Heart right ventricle (tissue), 16 donors: ENCODE measurements at regions of chr11 and their contacts with region 1.

Region 1: DNA sequence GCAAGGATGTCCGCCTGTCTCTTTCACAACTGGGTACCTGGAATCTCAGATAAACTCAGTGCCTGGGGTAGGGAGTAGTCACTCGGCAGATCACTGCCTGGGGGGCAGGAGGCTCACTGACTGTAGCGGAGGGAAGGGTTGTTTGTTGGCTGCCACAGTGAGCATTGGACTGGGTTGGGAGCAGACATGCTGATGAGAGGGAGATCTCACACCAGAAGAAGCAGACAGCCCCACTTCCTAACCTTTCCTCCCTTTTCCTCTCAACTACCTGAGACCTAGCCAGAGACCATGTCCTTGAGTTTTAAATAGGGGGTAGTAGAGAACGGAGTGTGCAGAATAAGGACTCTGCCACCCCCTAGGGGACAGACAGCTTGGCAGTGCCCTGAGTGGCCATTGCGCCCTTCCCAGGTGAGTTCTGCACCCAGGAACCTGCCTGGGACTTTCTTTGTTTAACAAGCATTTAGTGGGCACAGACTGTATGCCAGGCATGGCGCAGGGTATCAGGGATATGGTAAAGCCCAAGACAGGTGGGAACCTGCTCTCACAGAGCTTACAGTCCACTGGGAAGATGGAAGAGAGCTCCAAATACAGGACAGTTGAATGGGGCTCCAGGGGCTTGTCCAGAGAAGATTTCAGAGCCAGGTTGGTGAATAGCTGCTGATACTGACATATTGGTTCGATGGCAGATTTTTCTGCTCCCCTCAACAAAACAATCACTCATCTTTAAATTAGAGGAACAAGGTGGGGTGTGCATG is 115.7 kb upstream of the NNMT start:
- DNase-seq: peak; percentile 46 to 72
- ATAC-seq: peak; percentile 53 to 87 (median 69)
- H3K4me3 ChIP-seq: peak overlapping the region in 7 of 10 donors; percentile 4 to 38 (median 15)
- H3K27ac ChIP-seq: peak overlapping the region; percentile 76 to 97 (median 94)
- H3K4me1 ChIP-seq: peaks cover 33 to 92% (median 84%) of the 10 kb centered on the region in 9 donors
- H3K27me3 ChIP-seq: no peaks in the 10 kb centered on the region
- CTCF ChIP-seq: peak; percentile 17 to 84 (median 72)

Region 2: GRCh38 chr11:113875234-113876073 is 305.0 kb before region 1 on chr11 and contains the start of gene USP28:
- intact Hi-C with region 1: loop called in 1 of 10 experiments (anchors 10 kb)
- DNase-seq: peak; percentile 97 to 98
- ATAC-seq: peak; percentile 82 to 96 (median 90)
- H3K4me3 ChIP-seq: peak within 1 kb of the TSS; percentile 50 to 91 (median 84)
- H3K27ac ChIP-seq: peak within 1 kb of the TSS; percentile 80 to 98 (median 94)
- H3K4me1 ChIP-seq: peaks cover 0 to 50% (median 30%) of the 10 kb centered on the region in 9 donors
- H3K27me3 ChIP-seq: no peaks in the 10 kb centered on the region
- CTCF ChIP-seq: peak in 2 of 9 donors; percentile 16 to 18
- total RNA-seq, gene USP28: 72.2 to 174 (median 136) TPM

Region 3: GRCh38 chr11:114110952-114111947 is 69.2 kb before region 1 on chr11:
- intact Hi-C with region 1: loop called in 1 of 10 experiments (anchors 1 kb)
- DNase-seq: peak; percentile 40 to 58
- ATAC-seq: peak in 7 of 8 donors; percentile 35 to 72 (median 57)
- H3K4me3 ChIP-seq: peak overlapping the region in 8 of 10 donors; percentile 3 to 40 (median 32)
- H3K27ac ChIP-seq: peak overlapping the region; percentile 50 to 85 (median 75)
- H3K4me1 ChIP-seq: peaks cover 34 to 97% (median 85%) of the 10 kb centered on the region in 9 donors
- H3K27me3 ChIP-seq: no peaks in the 10 kb centered on the region
- CTCF ChIP-seq: peak in 2 of 9 donors; percentile 17 to 19

Region 4: DNA sequence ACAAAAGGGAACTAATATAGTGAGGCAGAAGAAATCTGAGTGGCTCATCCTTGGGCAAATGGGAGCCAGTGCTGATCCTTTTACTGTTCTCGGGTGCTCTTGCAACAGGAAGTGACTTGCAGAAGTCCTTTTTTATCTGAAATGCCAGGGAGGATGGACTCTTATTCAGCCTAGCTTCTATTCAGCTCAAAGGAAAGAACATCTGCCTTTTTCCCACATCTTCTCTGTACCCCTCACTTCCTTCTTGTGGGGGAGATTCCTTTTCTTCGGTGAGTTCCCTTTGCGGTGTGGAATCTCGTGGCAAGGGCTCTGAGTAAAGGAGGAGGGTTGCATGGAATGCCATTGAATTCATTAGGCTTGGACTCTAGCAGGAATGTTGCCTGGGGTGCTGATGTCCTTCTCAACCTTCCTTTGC is 44.7 kb before region 1 on chr11:
- intact Hi-C with region 1: no loop called
- DNase-seq: no peak
- ATAC-seq: peak in 3 of 8 donors; percentile 2 to 21 (median 18)
- H3K4me3 ChIP-seq: no peak overlapping the region
- H3K27ac ChIP-seq: peak overlapping the region in 8 of 10 donors; percentile 54 to 82 (median 72)
- H3K4me1 ChIP-seq: peaks cover 64 to 100% (median 99%) of the 10 kb centered on the region in 9 donors
- H3K27me3 ChIP-seq: no peaks in the 10 kb centered on the region
- CTCF ChIP-seq: no peak

Region 5: GRCh38 chr11:114154271-114155047 is 26.0 kb before region 1 on chr11:
- intact Hi-C with region 1: no loop called
- DNase-seq: no peak
- ATAC-seq: peak in 5 of 8 donors; percentile 6 to 69 (median 43)
- H3K4me3 ChIP-seq: no peak overlapping the region
- H3K27ac ChIP-seq: peak overlapping the region in 9 of 10 donors; percentile 10 to 99 (median 93)
- H3K4me1 ChIP-seq: peaks cover 49 to 97% (median 87%) of the 10 kb centered on the region in 9 donors
- H3K27me3 ChIP-seq: no peaks in the 10 kb centered on the region
- CTCF ChIP-seq: no peak

Region 6: DNA sequence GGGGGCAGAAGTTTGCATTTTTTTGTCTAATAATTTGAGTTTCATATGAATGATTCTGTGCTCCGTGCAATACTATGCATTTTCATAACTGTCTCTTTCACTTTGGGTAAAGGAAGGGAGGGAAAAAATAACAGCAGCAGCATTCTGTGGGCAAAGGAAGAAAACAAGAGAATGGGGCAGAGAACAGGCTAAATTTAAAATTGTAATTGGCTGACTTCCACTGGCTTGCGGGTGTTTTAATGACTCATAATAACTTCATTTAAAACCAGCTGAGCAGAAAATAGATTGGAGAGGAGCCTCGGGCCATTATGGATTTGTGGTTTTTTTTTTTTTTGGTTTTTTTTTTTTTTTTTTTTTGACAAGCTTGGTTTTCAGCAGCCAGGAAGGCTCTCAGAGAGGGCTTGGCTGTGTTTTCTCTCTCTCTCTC is 13.6 kb before region 1 on chr11:
- intact Hi-C with region 1: loop called in 4 of 10 experiments (anchors 1 to 2 kb)
- DNase-seq: no peak
- ATAC-seq: peak in 4 of 8 donors; percentile 6 to 28 (median 15)
- H3K4me3 ChIP-seq: peak overlapping the region in 5 of 10 donors; percentile 1 to 7 (median 4)
- H3K27ac ChIP-seq: peak overlapping the region; percentile 74 to 100 (median 97)
- H3K4me1 ChIP-seq: peaks cover 82 to 99% (median 95%) of the 10 kb centered on the region in 9 donors
- H3K27me3 ChIP-seq: no peaks in the 10 kb centered on the region
- CTCF ChIP-seq: no peak

Region 7: GRCh38 chr11:114243461-114244372 is 63.2 kb after region 1 on chr11:
- intact Hi-C with region 1: loop called in 1 of 10 experiments (anchors 5 kb)
- DNase-seq: peak in 1 of 2 donors; percentile 80
- ATAC-seq: peak; percentile 68 to 94 (median 73)
- H3K4me3 ChIP-seq: no peak overlapping the region
- H3K27ac ChIP-seq: peak overlapping the region in 9 of 10 donors; percentile 2 to 79 (median 55)
- H3K4me1 ChIP-seq: peaks cover 11 to 62% (median 37%) of the 10 kb centered on the region in 9 donors
- H3K27me3 ChIP-seq: no peaks in the 10 kb centered on the region
- CTCF ChIP-seq: no peak